ENCODE measurements at regions of chrX and their contacts with region 1.

Region 1: GRCh38 chrX:8520791-8521190 is 56.2 kb downstream of the VCX3B start:
- DNase-seq: no peak
- ATAC-seq: no peak
- H3K4me3 ChIP-seq: no peak overlapping the region
- H3K27ac ChIP-seq: no peak overlapping the region
- H3K4me1 ChIP-seq: no peaks in the 10 kb centered on the region
- H3K27me3 ChIP-seq: no peaks in the 10 kb centered on the region
- CTCF ChIP-seq: no peak

Region 2: DNA sequence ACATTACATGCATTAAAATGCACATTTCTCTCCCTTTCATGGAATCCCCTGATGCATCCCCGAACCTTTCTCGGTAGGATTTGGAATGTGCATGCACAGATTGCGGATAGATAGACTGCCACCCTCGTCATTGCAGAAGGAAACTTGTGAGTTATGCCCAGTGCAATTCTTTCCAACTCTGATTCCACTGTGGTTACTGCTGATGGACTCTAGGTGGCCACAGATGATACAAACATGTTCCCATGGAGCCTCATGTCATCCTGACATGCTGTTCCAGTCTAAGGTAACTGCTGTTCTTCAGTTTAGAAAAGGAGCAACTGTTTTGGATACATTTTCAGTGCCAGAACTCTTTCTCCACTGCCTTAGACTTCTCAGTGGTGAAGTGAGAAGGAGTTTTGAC is 65.2 kb before region 1 on chrX:
- intact Hi-C with region 1: loop called in 1 of 10 experiments (anchors 10 kb)
- DNase-seq: no peak
- ATAC-seq: no peak
- H3K4me3 ChIP-seq: no peak overlapping the region
- H3K27ac ChIP-seq: no peak overlapping the region
- H3K4me1 ChIP-seq: peaks cover 0 to 15% (median 7%) of the 10 kb centered on the region in 9 donors
- H3K27me3 ChIP-seq: no peaks in the 10 kb centered on the region
- CTCF ChIP-seq: no peak

Region 3: DNA sequence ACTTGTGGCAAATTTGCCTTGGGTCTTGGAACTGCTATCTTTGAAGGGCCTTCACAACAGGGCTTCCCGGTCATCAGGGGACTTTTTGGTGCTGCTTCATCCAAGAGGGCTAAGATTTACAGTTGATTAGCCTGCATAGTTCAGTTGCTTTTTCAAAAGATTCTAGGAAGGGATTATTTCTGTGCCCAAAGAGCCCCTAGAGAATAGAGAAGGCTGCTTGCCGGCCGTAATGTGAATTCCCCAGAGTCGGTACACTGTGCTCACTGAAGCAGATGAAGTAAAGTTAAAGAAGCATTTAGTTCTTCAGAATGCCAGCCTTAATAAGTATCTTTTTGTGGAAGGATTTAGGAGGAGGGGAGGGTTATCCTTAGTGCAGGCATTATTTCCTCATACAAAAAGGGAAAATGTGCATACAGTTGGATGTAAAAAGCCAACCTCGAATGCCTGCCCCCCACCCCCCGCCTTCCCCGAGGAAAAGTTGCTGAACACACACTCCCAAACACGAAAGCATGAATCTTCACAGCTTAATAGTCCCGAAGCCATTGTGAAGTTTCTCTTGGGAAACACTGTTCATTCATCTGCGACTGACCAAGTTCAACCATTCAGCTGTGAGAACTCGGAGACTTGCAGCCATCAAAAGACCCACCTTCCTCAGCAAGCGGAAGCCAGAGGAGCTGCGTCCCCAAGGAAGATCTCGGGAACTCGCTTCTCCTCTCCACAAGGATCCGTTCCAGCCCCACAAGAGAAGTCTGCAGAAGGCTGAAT is 163.6 kb after region 1 on chrX:
- intact Hi-C with region 1: no loop called
- DNase-seq: no peak
- ATAC-seq: no peak
- H3K4me3 ChIP-seq: no peak overlapping the region
- H3K27ac ChIP-seq: no peak overlapping the region
- H3K4me1 ChIP-seq: no peaks in the 10 kb centered on the region
- H3K27me3 ChIP-seq: no peaks in the 10 kb centered on the region
- CTCF ChIP-seq: no peak

Region 4: DNA sequence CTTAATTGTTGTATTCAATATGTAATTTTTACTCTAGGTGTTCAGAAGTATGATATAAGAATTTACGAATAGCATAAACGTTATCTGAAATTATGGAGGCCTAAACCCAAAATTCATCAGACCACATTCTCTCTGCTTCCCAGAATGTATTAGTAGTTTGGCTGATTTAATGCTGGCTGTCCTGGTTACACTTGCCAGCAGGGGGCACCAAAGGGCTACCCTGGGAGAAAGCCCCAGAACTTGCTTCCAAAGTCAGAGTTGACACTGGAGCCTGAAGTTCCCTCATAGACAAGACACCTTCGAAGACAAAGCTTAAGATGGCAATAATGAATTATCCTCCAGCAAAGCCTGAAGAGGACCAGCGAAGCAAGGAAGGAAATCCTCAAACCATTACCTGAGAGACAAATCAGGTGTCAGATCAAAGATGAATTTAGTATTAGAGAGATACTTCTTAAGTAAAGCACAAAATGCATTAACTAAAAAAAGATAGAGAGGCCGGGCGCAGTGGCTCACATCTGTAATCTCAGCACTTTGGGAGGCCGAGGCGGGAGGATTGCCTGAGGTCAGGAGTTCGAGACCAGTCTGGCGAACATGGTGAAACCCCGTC is 222.4 kb after region 1 on chrX:
- intact Hi-C with region 1: no loop called
- DNase-seq: peak; percentile 17 to 28
- ATAC-seq: no peak
- H3K4me3 ChIP-seq: no peak overlapping the region
- H3K27ac ChIP-seq: no peak overlapping the region
- H3K4me1 ChIP-seq: no peaks in the 10 kb centered on the region
- H3K27me3 ChIP-seq: peaks cover 0 to 7% (median 0%) of the 10 kb centered on the region in 7 donors
- CTCF ChIP-seq: peak in 8 of 9 donors; percentile 42 to 77 (median 58)

Measured in heart right ventricle (tissue), 16 donors.